ENCODE measurements at regions of chr15 and their contacts with region 1.

Region 1: DNA sequence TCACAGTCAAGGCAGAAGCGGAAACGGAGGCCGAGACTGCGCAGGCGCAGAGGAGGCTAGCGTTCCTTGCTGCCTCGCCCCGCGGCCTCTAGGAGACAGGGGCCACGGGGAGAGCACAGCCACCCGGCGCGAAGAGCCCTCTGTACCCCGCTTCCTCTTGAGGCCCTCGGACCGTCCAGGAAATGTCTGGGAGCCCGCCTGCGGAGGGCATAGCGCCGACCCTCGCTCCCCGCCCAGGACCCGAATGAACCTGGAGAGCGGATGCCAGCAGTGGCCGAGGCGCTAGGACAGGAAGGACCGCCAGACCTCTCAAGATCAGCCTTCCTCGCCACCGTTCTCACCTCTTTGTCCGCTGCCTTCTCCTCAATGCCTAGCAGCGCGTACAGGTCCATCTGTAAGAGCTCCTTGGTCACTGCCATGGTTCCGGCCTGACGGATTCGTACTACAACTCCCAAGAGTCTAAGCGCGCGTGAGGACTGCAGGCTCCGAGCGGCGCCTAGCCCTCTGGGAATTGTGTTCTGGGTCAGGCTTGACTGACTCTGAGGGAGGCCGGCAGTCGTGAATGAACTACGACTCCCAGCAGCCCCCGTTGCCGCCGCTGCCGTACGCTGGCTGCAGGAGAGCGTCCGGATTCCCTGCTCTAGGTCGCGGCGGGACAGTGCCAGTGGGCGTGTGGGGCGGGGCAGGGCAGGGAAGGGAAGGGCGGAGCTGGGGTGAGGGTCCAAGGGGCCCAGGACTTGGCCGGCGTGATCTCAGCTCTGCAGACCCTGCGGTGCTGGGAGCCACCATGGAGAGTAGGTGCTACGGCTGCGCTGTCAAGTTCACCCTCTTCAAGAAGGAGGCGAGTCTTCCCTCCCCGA is at the starts of genes DNAJC17 and ZFYVE19:
- DNase-seq: peak; percentile 86 to 96 (median 91)
- ATAC-seq: peak; percentile 99
- H3K4me3 ChIP-seq: peak within 1 kb of the TSS; percentile 99
- H3K4me3 Mint-ChIP-seq: peak within 1 kb of the TSS; percentile 92 to 98 (median 96)
- H3K27ac ChIP-seq: peak within 1 kb of the TSS; percentile 95
- H3K27ac Mint-ChIP-seq: peak within 1 kb of the TSS; percentile 84 to 98 (median 96)
- H3K4me1 ChIP-seq: peaks cover 14 to 16% of the 10 kb centered on the region in 2 donors
- H3K4me1 Mint-ChIP-seq: peaks cover 17 to 43% (median 25%) of the 10 kb centered on the region in 7 donors
- H3K27me3 ChIP-seq: no peaks in the 10 kb centered on the region
- H3K27me3 Mint-ChIP-seq: no peaks in the 10 kb centered on the region
- total RNA-seq, gene DNAJC17: 28.8 to 50.9 (median 36.7) TPM
- total RNA-seq, gene ZFYVE19: 17.9 to 31.9 (median 30.5) TPM

Region 2: GRCh38 chr15:40470423-40471104 is 336.7 kb before region 1 on chr15 and contains the start of gene CHST14:
- CTCF ChIA-PET with region 1: no interaction called
- POLR2A ChIA-PET with region 1: no interaction called
- intact Hi-C with region 1: loop called in 1 of 2 experiments (anchors 10 kb)
- DNase-seq: peak; percentile 24 to 68 (median 53)
- ATAC-seq: peak; percentile 88
- H3K4me3 ChIP-seq: peak within 1 kb of the TSS; percentile 89
- H3K4me3 Mint-ChIP-seq: peak within 1 kb of the TSS; percentile 90 to 96 (median 92)
- H3K27ac ChIP-seq: peak within 1 kb of the TSS; percentile 81
- H3K27ac Mint-ChIP-seq: peak within 1 kb of the TSS; percentile 80 to 95 (median 87)
- H3K4me1 ChIP-seq: peaks cover 8 to 16% of the 10 kb centered on the region in 2 donors
- H3K4me1 Mint-ChIP-seq: peaks cover 15 to 47% (median 37%) of the 10 kb centered on the region in 7 donors
- H3K27me3 ChIP-seq: no peaks in the 10 kb centered on the region
- H3K27me3 Mint-ChIP-seq: peaks cover 0 to 3% (median 0%) of the 10 kb centered on the region in 5 donors
- total RNA-seq, gene CHST14: 7.3 to 12.5 (median 10.8) TPM

Region 3: GRCh38 chr15:40593588-40594428 is 213.4 kb before region 1 on chr15 and contains the start of gene KNL1:
- CTCF ChIA-PET with region 1: no interaction called
- POLR2A ChIA-PET with region 1: interaction called, 7 read pairs
- intact Hi-C with region 1: loop called (anchors 1 kb)
- DNase-seq: peak; percentile 83 to 94 (median 91)
- ATAC-seq: peak; percentile 85
- H3K4me3 ChIP-seq: peak within 1 kb of the TSS; percentile 98
- H3K4me3 Mint-ChIP-seq: peak within 1 kb of the TSS; percentile 91 to 99 (median 96)
- H3K27ac ChIP-seq: peak within 1 kb of the TSS; percentile 83
- H3K27ac Mint-ChIP-seq: peak within 1 kb of the TSS; percentile 91 to 100 (median 98)
- H3K4me1 ChIP-seq: peaks cover 11 to 12% of the 10 kb centered on the region in 2 donors
- H3K4me1 Mint-ChIP-seq: peaks cover 13 to 41% (median 25%) of the 10 kb centered on the region in 7 donors
- H3K27me3 ChIP-seq: no peaks in the 10 kb centered on the region
- H3K27me3 Mint-ChIP-seq: peaks cover 0 to 12% (median 6%) of the 10 kb centered on the region in 5 donors
- total RNA-seq, gene KNL1: 0.16 to 41.5 (median 1.7) TPM

Region 4: DNA sequence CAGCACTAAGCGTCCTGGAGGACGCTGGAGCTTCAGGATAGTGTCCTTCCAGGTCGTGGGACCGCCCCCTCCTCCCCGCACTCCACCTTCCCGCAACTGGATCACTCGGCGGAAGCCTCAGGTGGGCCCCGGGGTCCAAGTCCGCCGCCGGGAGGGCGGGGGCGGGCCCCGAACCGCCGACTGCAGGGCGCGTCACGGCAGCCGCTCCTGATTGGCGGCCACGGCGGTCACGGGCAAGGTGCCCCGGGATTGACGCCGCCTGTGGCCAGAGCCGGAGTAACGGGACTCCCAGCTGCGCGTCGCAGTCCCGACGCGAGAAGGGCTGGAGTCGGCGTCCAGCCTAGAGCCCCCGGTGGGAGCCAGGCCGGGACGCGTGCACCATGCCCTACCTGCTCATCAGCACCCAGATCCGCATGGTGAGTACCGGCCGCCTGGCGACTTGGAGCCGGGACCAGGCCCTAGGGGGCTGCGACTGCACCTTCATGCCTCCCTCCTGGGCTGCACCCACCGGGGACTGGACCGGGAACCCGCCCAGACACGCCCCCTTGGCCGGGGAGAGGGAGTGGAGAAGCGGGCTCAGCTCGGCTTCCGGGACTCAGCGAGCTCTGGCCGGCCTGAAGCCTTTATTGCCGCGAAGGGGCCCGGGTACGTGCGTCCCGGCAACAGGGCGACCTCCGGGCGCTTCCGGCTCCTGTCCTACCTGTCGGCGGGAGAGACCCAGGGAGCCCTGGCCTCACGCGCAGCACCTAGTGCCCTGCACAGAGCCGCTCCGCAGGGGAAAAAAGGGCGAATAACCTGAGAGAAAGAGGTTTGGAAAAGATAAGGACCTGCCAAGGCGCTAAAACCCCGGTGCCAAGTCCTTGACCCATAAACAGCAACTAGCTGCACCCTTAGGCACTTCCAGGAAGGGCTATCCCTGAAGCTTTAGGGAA is 43.2 kb before region 1 on chr15 and contains the start of gene GCHFR:
- CTCF ChIA-PET with region 1: interaction called, 3 read pairs
- POLR2A ChIA-PET with region 1: no interaction called
- intact Hi-C with region 1: loop called (anchors 1 to 2 kb)
- DNase-seq: peak; percentile 53 to 86 (median 57)
- ATAC-seq: peak; percentile 72
- H3K4me3 ChIP-seq: peak within 1 kb of the TSS; percentile 71
- H3K4me3 Mint-ChIP-seq: peak within 1 kb of the TSS; percentile 76 to 94 (median 90)
- H3K27ac ChIP-seq: peak within 1 kb of the TSS; percentile 78
- H3K27ac Mint-ChIP-seq: peak within 1 kb of the TSS; percentile 82 to 94 (median 87)
- H3K4me1 ChIP-seq: peaks cover 17 to 21% of the 10 kb centered on the region in 2 donors
- H3K4me1 Mint-ChIP-seq: peaks cover 10 to 39% (median 36%) of the 10 kb centered on the region in 7 donors
- H3K27me3 ChIP-seq: no peaks in the 10 kb centered on the region
- H3K27me3 Mint-ChIP-seq: no peaks in the 10 kb centered on the region
- total RNA-seq, gene GCHFR: 14.5 to 38.3 (median 18.1) TPM

Region 5: GRCh38 chr15:40847205-40847961 is 40.1 kb after region 1 on chr15:
- CTCF ChIA-PET with region 1: no interaction called
- POLR2A ChIA-PET with region 1: no interaction called
- intact Hi-C with region 1: loop called (anchors 1 kb)
- DNase-seq: no peak
- ATAC-seq: peak; percentile 85
- H3K4me3 ChIP-seq: no peak overlapping the region
- H3K4me3 Mint-ChIP-seq: peak overlapping the region in 7 of 10 donors; percentile 6 to 68 (median 28)
- H3K27ac ChIP-seq: no peak overlapping the region
- H3K27ac Mint-ChIP-seq: peak overlapping the region in 6 of 9 donors; percentile 9 to 68 (median 34)
- H3K4me1 ChIP-seq: peaks cover 0 to 15% of the 10 kb centered on the region in 2 donors
- H3K4me1 Mint-ChIP-seq: peaks cover 12 to 38% (median 32%) of the 10 kb centered on the region in 7 donors
- H3K27me3 ChIP-seq: peaks cover 0 to 3% of the 10 kb centered on the region in 2 donors
- H3K27me3 Mint-ChIP-seq: peaks cover 0 to 19% (median 4%) of the 10 kb centered on the region in 5 donors

Region 6: DNA sequence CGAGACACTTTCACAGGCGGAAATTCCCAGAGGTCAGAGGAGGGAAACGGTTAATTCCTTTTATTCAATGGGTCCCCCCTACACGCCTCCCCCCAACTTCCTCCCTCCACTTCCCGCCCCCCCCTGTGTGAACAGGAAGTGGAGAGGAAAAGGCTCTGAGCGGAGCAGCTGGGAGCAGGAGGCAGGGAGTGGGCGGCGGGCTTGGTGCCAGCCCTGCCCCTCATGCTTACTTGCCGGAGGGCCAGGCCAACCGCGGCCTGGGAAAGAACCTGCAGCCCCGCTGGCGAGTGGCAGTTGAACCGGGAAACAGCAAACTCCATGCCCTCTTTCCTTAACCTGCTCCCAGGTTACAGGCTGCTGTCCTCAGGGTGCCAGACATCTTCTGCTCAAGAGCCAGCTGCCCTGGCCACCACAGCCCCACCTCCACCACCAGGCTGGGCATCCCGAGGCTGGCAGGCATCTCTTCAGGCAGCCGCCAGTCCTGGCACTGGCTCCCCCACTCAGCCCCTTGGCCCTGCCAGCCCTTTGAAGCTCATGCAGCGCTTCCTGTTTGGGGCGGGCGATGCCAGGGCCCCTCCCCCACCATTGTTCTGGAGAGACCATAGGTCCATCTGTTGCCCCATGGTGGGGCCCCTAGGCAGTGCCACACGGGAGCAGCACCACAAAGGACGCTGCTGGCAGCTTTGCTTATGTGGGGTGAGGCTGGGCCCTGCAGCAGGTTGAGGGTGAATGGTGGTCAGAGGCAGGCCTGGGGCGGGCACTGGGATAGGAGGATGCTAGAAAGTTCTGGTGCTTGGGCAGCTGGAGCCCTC is 99.9 kb after region 1 on chr15:
- CTCF ChIA-PET with region 1: no interaction called
- POLR2A ChIA-PET with region 1: no interaction called
- intact Hi-C with region 1: no loop called
- DNase-seq: peak in 7 of 9 donors; percentile 59 to 72 (median 63)
- ATAC-seq: peak; percentile 45
- H3K4me3 ChIP-seq: peak overlapping the region; percentile 66
- H3K4me3 Mint-ChIP-seq: peak overlapping the region; percentile 60 to 88 (median 84)
- H3K27ac ChIP-seq: peak overlapping the region; percentile 55
- H3K27ac Mint-ChIP-seq: peak overlapping the region; percentile 42 to 93 (median 90)
- H3K4me1 ChIP-seq: peaks cover 6 to 16% of the 10 kb centered on the region in 2 donors
- H3K4me1 Mint-ChIP-seq: peaks cover 29 to 44% (median 34%) of the 10 kb centered on the region in 7 donors
- H3K27me3 ChIP-seq: no peaks in the 10 kb centered on the region
- H3K27me3 Mint-ChIP-seq: no peaks in the 10 kb centered on the region

Region 7: GRCh38 chr15:40952901-40953712 is 145.8 kb after region 1 on chr15 and contains the start of gene CHAC1:
- CTCF ChIA-PET with region 1: no interaction called
- POLR2A ChIA-PET with region 1: no interaction called
- intact Hi-C with region 1: loop called (anchors 1 kb)
- DNase-seq: peak; percentile 79 to 97 (median 94)
- ATAC-seq: peak; percentile 98
- H3K4me3 ChIP-seq: peak within 1 kb of the TSS; percentile 68
- H3K4me3 Mint-ChIP-seq: peak within 1 kb of the TSS; percentile 87 to 96 (median 94)
- H3K27ac ChIP-seq: peak within 1 kb of the TSS; percentile 74
- H3K27ac Mint-ChIP-seq: peak within 1 kb of the TSS in 8 of 9 donors; percentile 76 to 95 (median 88)
- H3K4me1 ChIP-seq: peaks cover 10 to 14% of the 10 kb centered on the region in 2 donors
- H3K4me1 Mint-ChIP-seq: peaks cover 7 to 34% (median 19%) of the 10 kb centered on the region in 7 donors
- H3K27me3 ChIP-seq: no peaks in the 10 kb centered on the region
- H3K27me3 Mint-ChIP-seq: peaks cover 0 to 4% (median 0%) of the 10 kb centered on the region in 5 donors
- total RNA-seq, gene CHAC1: 0.24 to 5.7 (median 1.1) TPM